OCI-LY7 (cell line): ENCODE measurements at regions of chr4 and their contacts with region 1.

Region 1: DNA sequence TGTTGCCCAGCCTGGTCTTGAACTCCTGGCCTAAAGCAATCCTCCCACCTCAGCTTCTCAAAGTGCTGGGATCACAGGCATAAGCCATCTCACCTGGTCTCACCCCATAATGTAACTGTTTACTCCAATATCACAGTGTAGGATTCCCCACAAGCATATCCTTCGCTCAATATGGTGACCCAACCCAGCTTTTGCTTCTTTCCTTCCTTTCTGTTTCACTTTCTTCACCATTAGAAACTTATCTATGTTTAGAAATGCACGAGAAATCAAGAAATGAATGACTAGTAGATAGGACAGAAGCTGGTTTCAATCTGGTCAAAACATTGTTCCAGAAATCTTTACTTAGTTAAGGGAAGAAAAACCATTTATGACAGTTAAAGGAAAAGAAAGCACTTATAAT is 18.9 kb downstream of the TSPAN5 start:
- DNase-seq: no peak
- H3K4me3 ChIP-seq: no peak overlapping the region
- H3K27ac ChIP-seq: no peak overlapping the region
- H3K4me1 ChIP-seq: no peaks in the 10 kb centered on the region
- CTCF ChIP-seq: no peak

Region 2: GRCh38 chr4:97819294-97819693 is 820.2 kb before region 1 on chr4:
- CTCF ChIA-PET with region 1: no interaction called
- POLR2A ChIA-PET with region 1: no interaction called
- intact Hi-C with region 1: loop called (anchors 10 kb)
- DNase-seq: no peak
- H3K4me3 ChIP-seq: no peak overlapping the region
- H3K27ac ChIP-seq: no peak overlapping the region
- H3K4me1 ChIP-seq: no peaks in the 10 kb centered on the region
- CTCF ChIP-seq: no peak